Dorsolateral prefrontal cortex (tissue), 120 donors: ENCODE measurements at regions of chr11 and their contacts with region 1.

Region 1: DNA sequence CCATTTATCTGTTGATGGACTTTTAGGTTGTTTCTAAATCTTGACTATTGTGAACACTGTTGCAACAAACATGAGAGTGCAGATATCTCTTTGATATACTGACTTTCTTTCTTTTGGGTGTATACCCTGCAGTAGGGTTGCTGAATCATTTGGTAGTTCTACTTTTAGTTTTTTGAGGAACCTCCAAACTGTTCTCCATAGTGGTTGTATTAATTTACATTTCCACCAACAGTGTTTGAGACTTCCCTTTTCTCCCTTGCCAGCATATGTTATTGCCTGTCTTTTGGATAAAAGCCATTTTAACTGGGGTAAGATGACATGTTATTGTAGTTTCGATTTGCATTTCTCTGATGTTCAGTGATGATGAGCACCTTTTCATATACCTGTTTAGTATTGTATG is 330.0 kb downstream of the DDX10 start:
- DNase-seq: no peak
- H3K4me3 ChIP-seq: no peak overlapping the region
- H3K27ac ChIP-seq: no peak overlapping the region
- H3K27me3 ChIP-seq: no peaks in the 10 kb centered on the region
- CTCF ChIP-seq: no peak

Region 2: DNA sequence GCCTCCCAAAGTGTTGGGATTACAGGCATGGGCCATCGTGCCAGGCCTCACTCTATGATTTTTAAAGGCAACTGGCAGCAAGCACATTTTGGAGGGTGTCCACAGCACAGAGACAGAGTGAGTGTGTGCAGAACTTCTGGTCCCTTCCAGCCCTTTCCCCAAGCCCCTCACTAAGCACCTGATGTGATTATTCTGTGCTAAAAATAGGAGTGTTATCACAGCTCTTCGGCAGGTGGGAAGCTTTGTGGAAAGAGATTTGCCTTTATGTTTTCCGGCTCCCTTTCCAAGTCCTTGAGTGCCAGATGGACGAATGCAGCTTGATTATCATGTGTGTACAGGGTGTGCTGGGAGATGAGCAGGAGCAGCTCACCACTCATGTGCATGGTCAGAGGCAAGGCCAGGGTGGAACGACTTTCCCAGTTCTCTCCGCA is 19.2 kb before region 1 on chr11:
- intact Hi-C with region 1: loop called in 1 of 2 experiments (anchors 2 kb)
- DNase-seq: peak in 1 of 10 donors; percentile 68
- H3K4me3 ChIP-seq: no peak overlapping the region
- H3K27ac ChIP-seq: peak overlapping the region in 1 of 59 donors; percentile 21
- H3K27me3 ChIP-seq: no peaks in the 10 kb centered on the region
- CTCF ChIP-seq: no peak